Gastrocnemius medialis (tissue), 4 donors: ENCODE measurements at regions of chr15 and their contacts with region 1.

Region 1: DNA sequence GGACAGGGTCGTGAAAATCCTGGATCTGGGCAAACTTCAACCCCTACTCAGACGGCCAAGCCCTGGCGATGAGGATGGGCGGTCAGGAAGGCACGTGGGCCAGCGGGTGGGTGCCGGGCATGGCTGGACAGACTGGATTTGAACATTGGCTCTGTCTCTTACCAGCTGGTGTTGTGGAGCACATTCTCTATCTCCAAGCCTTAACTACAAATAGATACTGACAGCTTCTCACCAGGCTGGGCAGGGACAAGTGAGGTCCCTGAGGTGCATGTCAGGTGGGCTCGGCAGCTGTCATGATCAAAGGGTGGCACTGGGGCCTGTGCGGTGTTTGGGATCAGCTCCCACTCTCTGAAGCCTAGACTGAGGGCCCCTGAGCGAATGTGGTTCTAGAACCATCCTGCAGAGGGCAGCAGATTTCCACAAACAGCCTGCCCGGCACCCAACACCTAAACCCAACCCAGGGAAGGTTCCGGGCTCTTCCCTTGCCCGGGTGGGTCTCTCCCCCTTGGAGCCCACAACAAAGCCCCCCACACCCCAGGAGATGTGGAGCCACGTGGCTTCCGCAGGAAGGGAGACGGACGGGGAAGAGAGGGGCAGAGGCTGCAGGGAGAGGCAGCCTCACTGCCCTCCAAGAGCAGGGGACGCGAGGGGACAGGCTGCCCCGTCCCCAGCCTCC is 58.4 kb downstream of the RGMA start:
- DNase-seq: peak; percentile 67 to 85
- ATAC-seq: peak; percentile 51 to 58
- H3K4me3 ChIP-seq: peak overlapping the region in 1 of 4 donors; percentile 14
- H3K27ac ChIP-seq: peak overlapping the region; percentile 89 to 94 (median 91)
- H3K4me1 ChIP-seq: peaks cover 53 to 55% of the 10 kb centered on the region in 2 donors
- H3K27me3 ChIP-seq: no peaks in the 10 kb centered on the region
- CTCF ChIP-seq: peak; percentile 88 to 94 (median 92)
- POLR2A ChIP-seq: no peak

Region 2: GRCh38 chr15:92803847-92804609 is 226.5 kb before region 1 on chr15:
- in situ Hi-C with region 1: no loop called
- intact Hi-C with region 1: loop called (anchors 2 kb)
- DNase-seq: peak; percentile 80 to 89
- ATAC-seq: peak; percentile 86 to 89
- H3K4me3 ChIP-seq: no peak overlapping the region
- H3K27ac ChIP-seq: peak overlapping the region; percentile 97 to 99 (median 98)
- H3K4me1 ChIP-seq: peaks cover 40 to 45% of the 10 kb centered on the region in 2 donors
- H3K27me3 ChIP-seq: no peaks in the 10 kb centered on the region
- CTCF ChIP-seq: peak in 1 of 5 experiments; percentile 11
- POLR2A ChIP-seq: peak; percentile 37 to 66

Region 3: GRCh38 chr15:93087825-93088199 is 57.2 kb after region 1 on chr15:
- in situ Hi-C with region 1: no loop called
- intact Hi-C with region 1: loop called (anchors 1 kb)
- DNase-seq: peak; percentile 70 to 83
- ATAC-seq: peak; percentile 53 to 57
- H3K4me3 ChIP-seq: peak overlapping the region; percentile 76 to 97 (median 80)
- H3K27ac ChIP-seq: peak overlapping the region; percentile 91 to 96 (median 93)
- H3K4me1 ChIP-seq: peaks cover 55 to 60% of the 10 kb centered on the region in 2 donors
- H3K27me3 ChIP-seq: no peaks in the 10 kb centered on the region
- CTCF ChIP-seq: peak; percentile 91 to 97 (median 95)
- POLR2A ChIP-seq: no peak

Region 4: DNA sequence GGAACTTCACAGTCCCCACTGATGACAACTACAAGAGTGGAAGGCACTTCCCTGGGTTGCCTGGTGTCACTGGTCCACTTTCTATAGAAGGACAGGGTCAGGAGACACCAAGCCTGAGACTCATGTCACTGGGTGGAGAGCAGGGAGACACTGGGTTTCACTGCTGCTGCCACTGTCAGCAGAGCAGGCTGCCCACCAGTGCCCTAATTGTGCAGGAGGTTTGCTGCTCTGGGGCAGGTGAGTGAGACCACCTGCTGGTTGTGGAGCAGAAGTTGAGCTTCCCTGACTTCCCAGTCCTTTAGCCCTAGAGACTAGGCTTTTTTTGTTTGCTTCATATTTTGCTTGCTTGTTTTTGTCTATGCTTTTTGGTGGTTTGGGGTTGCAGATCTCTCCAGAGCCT is 586.9 kb after region 1 on chr15:
- in situ Hi-C with region 1: no loop called
- intact Hi-C with region 1: loop called (anchors 2 kb)
- DNase-seq: peak; percentile 3 to 46
- ATAC-seq: peak in 1 of 2 donors; percentile 81
- H3K4me3 ChIP-seq: no peak overlapping the region
- H3K27ac ChIP-seq: no peak overlapping the region
- H3K4me1 ChIP-seq: peaks cover 0 to 2% of the 10 kb centered on the region in 2 donors
- H3K27me3 ChIP-seq: no peaks in the 10 kb centered on the region
- CTCF ChIP-seq: peak in 4 of 5 experiments; percentile 24 to 45 (median 33)
- POLR2A ChIP-seq: no peak

Region 5: DNA sequence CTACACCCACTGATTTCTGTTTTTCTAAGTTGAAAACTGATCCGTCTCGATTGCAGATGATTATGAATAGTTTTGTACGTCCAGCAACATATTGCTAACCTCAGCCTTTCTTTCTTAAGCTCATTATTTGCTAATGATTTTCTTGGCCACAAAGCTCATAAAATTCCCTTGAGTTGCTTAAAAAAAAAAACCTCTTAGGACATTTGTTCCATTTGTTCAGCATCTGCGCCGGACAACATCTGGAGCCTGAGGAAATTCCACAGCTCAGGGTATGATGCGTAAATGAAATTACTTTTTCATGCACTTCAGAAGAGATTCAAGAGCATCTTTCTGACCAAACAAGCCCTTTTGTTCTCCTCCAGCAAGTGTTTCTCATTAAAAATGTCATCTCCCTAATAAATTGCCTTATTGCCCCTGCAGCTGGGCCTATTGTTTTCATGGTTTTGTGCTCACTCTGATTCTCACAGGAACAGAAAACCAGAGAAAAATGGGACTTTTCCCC is 951.7 kb after region 1 on chr15:
- in situ Hi-C with region 1: loop called in 2 of 4 experiments (anchors 25 kb)
- intact Hi-C with region 1: loop called (anchors 5 kb)
- DNase-seq: peak; percentile 14 to 60
- ATAC-seq: peak; percentile 69 to 80
- H3K4me3 ChIP-seq: no peak overlapping the region
- H3K27ac ChIP-seq: peak overlapping the region; percentile 52 to 73 (median 54)
- H3K4me1 ChIP-seq: peaks cover 6 to 11% of the 10 kb centered on the region in 2 donors
- H3K27me3 ChIP-seq: no peaks in the 10 kb centered on the region
- CTCF ChIP-seq: no peak
- POLR2A ChIP-seq: no peak

Region 6: GRCh38 chr15:94119923-94120775 is 1089.6 kb after region 1 on chr15:
- in situ Hi-C with region 1: loop called (anchors 5 to 10 kb)
- intact Hi-C with region 1: loop called (anchors 1 kb)
- DNase-seq: peak; percentile 42 to 66
- ATAC-seq: peak; percentile 100
- H3K4me3 ChIP-seq: no peak overlapping the region
- H3K27ac ChIP-seq: peak overlapping the region; percentile 24 to 67 (median 46)
- H3K4me1 ChIP-seq: peaks cover 4 to 9% of the 10 kb centered on the region in 2 donors
- H3K27me3 ChIP-seq: no peaks in the 10 kb centered on the region
- CTCF ChIP-seq: peak; percentile 75 to 97 (median 85)
- POLR2A ChIP-seq: no peak